Esophagus squamous epithelium (tissue), 5 donors: ENCODE measurements at regions of chr3 and their contacts with region 1.

Region 1: GRCh38 chr3:4986782-4987537 is 7.7 kb downstream of the BHLHE40 start:
- DNase-seq: peak; percentile 73
- H3K4me3 ChIP-seq: peak overlapping the region; percentile 10 to 66 (median 42)
- H3K27ac ChIP-seq: peak overlapping the region; percentile 95 to 100 (median 99)
- H3K4me1 ChIP-seq: peaks cover 37 to 80% (median 54%) of the 10 kb centered on the region in 3 donors
- H3K27me3 ChIP-seq: no peaks in the 10 kb centered on the region
- CTCF ChIP-seq: no peak
- POLR2A ChIP-seq: peak in 3 of 4 donors; percentile 58 to 82 (median 70)

Region 2: GRCh38 chr3:5022966-5023776 is 36.2 kb after region 1 on chr3:
- intact Hi-C with region 1: loop called (anchors 5 kb)
- DNase-seq: no peak
- H3K4me3 ChIP-seq: no peak overlapping the region
- H3K27ac ChIP-seq: peak overlapping the region; percentile 84 to 93 (median 90)
- H3K4me1 ChIP-seq: peaks cover 37 to 84% (median 42%) of the 10 kb centered on the region in 3 donors
- H3K27me3 ChIP-seq: no peaks in the 10 kb centered on the region
- CTCF ChIP-seq: no peak
- POLR2A ChIP-seq: no peak